Activated CD8-positive, alpha-beta T cell treated with anti-CD3 and anti-CD28 coated beads for 36 hours (primary cell): ENCODE measurements at regions of chr9 and their contacts with region 1.

Region 1: GRCh38 chr9:20941174-20941690 is 90.2 kb downstream of the HACD4 start:
- DNase-seq: peak; percentile 66
- ATAC-seq: peak; percentile 96
- H3K4me3 Mint-ChIP-seq: no peak overlapping the region
- H3K27ac Mint-ChIP-seq: no peak overlapping the region
- H3K4me1 Mint-ChIP-seq: peaks cover 4% of the 10 kb centered on the region
- H3K27me3 Mint-ChIP-seq: no peaks in the 10 kb centered on the region
- CTCF ChIP-seq: peak; percentile 87

Region 2: GRCh38 chr9:19925817-19926503 is 1015.3 kb before region 1 on chr9:
- CTCF ChIA-PET with region 1: interaction called, 5 read pairs
- POLR2A ChIA-PET with region 1: no interaction called
- intact Hi-C with region 1: loop called (anchors 5 kb)
- DNase-seq: peak; percentile 84
- ATAC-seq: peak; percentile 99
- H3K4me3 Mint-ChIP-seq: peak overlapping the region; percentile 58
- H3K27ac Mint-ChIP-seq: no peak overlapping the region
- H3K4me1 Mint-ChIP-seq: peaks cover 10% of the 10 kb centered on the region
- H3K27me3 Mint-ChIP-seq: peaks cover 13% of the 10 kb centered on the region
- CTCF ChIP-seq: peak; percentile 95

Region 3: GRCh38 chr9:20356403-20357035 is 584.7 kb before region 1 on chr9:
- CTCF ChIA-PET with region 1: interaction called, 16 read pairs
- POLR2A ChIA-PET with region 1: no interaction called
- intact Hi-C with region 1: loop called (anchors 2 kb)
- DNase-seq: peak; percentile 72
- ATAC-seq: peak; percentile 50
- H3K4me3 Mint-ChIP-seq: no peak overlapping the region
- H3K27ac Mint-ChIP-seq: no peak overlapping the region
- H3K4me1 Mint-ChIP-seq: peaks cover 68% of the 10 kb centered on the region
- H3K27me3 Mint-ChIP-seq: no peaks in the 10 kb centered on the region
- CTCF ChIP-seq: peak; percentile 53

Region 4: DNA sequence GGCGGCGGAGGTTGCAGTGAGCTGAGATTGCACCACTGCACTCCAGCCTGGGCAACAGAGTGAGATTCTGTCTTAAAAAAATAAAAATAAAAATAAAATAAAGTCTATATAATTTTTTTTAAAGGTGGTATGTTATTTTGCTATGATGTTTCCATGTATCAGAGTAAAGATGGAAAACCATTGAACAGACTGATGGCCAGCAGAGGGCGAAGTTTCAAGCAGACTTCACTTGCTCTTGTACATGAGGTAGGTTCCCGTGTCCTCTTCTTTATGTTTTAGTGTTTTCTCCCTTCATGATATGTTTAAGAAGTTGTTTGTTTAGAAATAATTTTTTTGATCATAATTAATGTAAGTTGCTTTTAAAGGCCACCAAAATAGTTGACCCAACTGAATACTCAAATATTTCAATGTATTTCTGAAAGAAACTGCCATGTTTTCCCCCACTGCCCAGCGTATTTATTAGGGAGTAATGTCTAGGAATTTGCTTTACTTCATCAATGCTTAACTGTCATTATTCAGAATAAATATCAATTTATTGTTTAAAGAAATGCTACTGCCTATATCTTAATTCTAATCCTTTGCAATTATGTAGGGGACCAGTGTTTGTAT is 56.1 kb before region 1 on chr9:
- CTCF ChIA-PET with region 1: interaction called, 25 read pairs
- POLR2A ChIA-PET with region 1: no interaction called
- intact Hi-C with region 1: no loop called
- DNase-seq: peak; percentile 76
- ATAC-seq: peak; percentile 42
- H3K4me3 Mint-ChIP-seq: no peak overlapping the region
- H3K27ac Mint-ChIP-seq: no peak overlapping the region
- H3K4me1 Mint-ChIP-seq: no peaks in the 10 kb centered on the region
- H3K27me3 Mint-ChIP-seq: no peaks in the 10 kb centered on the region
- CTCF ChIP-seq: peak; percentile 63

Region 5: GRCh38 chr9:20914556-20914955 is 26.7 kb before region 1 on chr9:
- CTCF ChIA-PET with region 1: no interaction called
- POLR2A ChIA-PET with region 1: no interaction called
- intact Hi-C with region 1: no loop called
- DNase-seq: no peak
- ATAC-seq: no peak
- H3K4me3 Mint-ChIP-seq: no peak overlapping the region
- H3K27ac Mint-ChIP-seq: no peak overlapping the region
- H3K4me1 Mint-ChIP-seq: no peaks in the 10 kb centered on the region
- H3K27me3 Mint-ChIP-seq: no peaks in the 10 kb centered on the region
- CTCF ChIP-seq: no peak

Region 6: GRCh38 chr9:20929276-20929675 is 12.0 kb before region 1 on chr9:
- CTCF ChIA-PET with region 1: interaction called, 14 read pairs
- POLR2A ChIA-PET with region 1: interaction called, 3 read pairs
- intact Hi-C with region 1: no loop called
- DNase-seq: no peak
- ATAC-seq: no peak
- H3K4me3 Mint-ChIP-seq: no peak overlapping the region
- H3K27ac Mint-ChIP-seq: no peak overlapping the region
- H3K4me1 Mint-ChIP-seq: peaks cover 11% of the 10 kb centered on the region
- H3K27me3 Mint-ChIP-seq: no peaks in the 10 kb centered on the region
- CTCF ChIP-seq: no peak